ENCODE measurements at regions of chr1 and their contacts with region 1.

Region 1: DNA sequence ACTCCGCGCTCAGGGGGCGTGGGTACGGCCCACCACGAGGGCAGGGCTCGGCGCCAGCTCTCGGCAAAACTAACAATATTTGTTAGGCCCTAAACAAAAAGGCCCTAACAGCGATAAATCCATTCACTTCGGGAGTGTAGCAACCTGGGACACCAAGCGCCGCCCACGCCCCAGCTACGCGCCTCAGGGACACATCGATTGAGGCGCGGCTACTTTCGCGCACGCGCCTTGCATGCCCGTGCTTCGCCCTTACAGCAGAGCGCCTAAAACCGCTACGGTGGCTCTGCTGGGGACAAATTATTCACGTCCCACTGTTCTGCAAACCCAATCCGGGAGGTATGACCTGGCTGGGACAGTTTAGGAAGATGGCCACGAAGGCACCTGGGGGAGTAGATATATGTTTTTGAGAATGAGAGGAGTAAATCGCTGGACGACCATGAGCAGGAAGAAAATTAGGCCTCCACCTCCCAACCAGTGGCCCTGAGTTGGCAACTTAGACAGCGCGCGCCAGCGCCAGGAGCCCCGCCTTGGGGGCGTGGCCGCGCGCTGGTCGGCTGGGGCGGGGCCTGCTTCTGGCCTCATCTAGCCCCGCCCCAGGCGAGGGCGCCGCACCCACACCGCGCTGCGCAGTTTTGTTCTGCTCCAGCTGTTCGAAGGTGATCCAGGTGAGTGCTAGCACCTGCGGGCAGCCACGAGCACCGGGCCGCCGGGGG is at the start of gene MGST3:
- DNase-seq: peak; percentile 97
- H3K4me3 ChIP-seq: peak within 1 kb of the TSS; percentile 65 to 88 (median 86)
- H3K27ac ChIP-seq: peak within 1 kb of the TSS; percentile 91 to 95 (median 92)
- H3K4me1 ChIP-seq: peaks cover 34 to 47% (median 44%) of the 10 kb centered on the region in 4 donors
- H3K27me3 ChIP-seq: no peaks in the 10 kb centered on the region
- CTCF ChIP-seq: no peak
- EP300 ChIP-seq: no peak
- POLR2A ChIP-seq: peak; percentile 78
- total RNA-seq, gene MGST3: 202 to 257 (median 232) TPM

Region 2: GRCh38 chr1:165403835-165404482 is 226.8 kb before region 1 on chr1:
- intact Hi-C with region 1: no loop called
- DNase-seq: no peak
- H3K4me3 ChIP-seq: no peak overlapping the region
- H3K27ac ChIP-seq: no peak overlapping the region
- H3K4me1 ChIP-seq: no peaks in the 10 kb centered on the region
- H3K27me3 ChIP-seq: peaks cover 0 to 23% (median 0%) of the 10 kb centered on the region in 4 donors
- CTCF ChIP-seq: peak; percentile 27 to 47 (median 41)
- EP300 ChIP-seq: no peak
- POLR2A ChIP-seq: no peak

Region 3: DNA sequence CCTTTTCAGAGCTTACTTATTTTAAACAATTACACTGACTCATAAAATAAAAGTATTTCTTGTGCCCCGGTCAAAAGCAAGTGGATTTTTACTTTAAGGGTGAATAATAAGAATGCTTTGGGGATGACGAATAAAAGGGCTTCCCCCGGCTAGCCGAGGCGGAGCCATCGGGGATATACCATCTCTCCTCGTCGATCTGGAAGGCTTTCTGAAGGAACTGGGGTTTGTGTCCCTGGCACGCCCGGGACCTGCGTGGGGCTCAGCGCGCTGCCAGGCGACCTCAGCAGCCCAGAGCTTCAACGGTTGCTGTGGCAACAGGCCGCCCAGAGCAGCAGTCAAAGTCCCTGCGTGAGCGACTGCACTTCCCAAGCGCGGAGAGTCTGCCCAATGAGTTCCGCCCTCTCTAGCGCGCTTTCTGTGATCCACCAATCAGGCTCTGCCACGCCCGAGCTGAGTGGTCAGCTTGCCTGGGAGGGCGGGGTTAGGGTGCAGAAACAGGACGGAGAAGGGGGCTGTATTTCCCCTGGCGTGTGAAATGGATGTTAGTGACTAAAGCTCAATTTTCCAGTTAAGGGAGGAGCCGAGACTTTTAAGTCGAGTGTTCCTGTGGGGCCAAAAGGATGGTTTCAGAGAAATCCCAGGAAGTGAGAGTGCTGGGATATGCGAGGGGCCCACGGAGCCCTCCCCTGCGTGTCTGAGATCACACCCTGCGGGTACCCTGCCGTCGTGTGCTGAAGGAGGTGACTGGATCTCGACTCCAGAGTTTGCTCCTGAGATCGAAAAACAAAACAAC is 32.7 kb before region 1 on chr1:
- intact Hi-C with region 1: loop called (anchors 5 kb)
- DNase-seq: peak; percentile 99
- H3K4me3 ChIP-seq: peak overlapping the region; percentile 58 to 66 (median 60)
- H3K27ac ChIP-seq: peak overlapping the region; percentile 65 to 80 (median 72)
- H3K4me1 ChIP-seq: peaks cover 4 to 15% (median 11%) of the 10 kb centered on the region in 4 donors
- H3K27me3 ChIP-seq: peaks cover 0 to 8% (median 0%) of the 10 kb centered on the region in 4 donors
- CTCF ChIP-seq: no peak
- EP300 ChIP-seq: no peak
- POLR2A ChIP-seq: no peak

Region 4: GRCh38 chr1:165686971-165687433 is 56.2 kb after region 1 on chr1:
- intact Hi-C with region 1: no loop called
- DNase-seq: no peak
- H3K4me3 ChIP-seq: no peak overlapping the region
- H3K27ac ChIP-seq: no peak overlapping the region
- H3K4me1 ChIP-seq: peaks cover 0 to 13% (median 5%) of the 10 kb centered on the region in 4 donors
- H3K27me3 ChIP-seq: no peaks in the 10 kb centered on the region
- CTCF ChIP-seq: no peak
- EP300 ChIP-seq: no peak
- POLR2A ChIP-seq: no peak

Region 5: GRCh38 chr1:165697881-165698760 is 67.3 kb after region 1 on chr1 and contains the start of gene ALDH9A1:
- intact Hi-C with region 1: loop called (anchors 5 kb)
- DNase-seq: peak; percentile 96
- H3K4me3 ChIP-seq: peak within 1 kb of the TSS; percentile 57 to 91 (median 78)
- H3K27ac ChIP-seq: peak within 1 kb of the TSS; percentile 91 to 96 (median 94)
- H3K4me1 ChIP-seq: peaks cover 20 to 35% (median 31%) of the 10 kb centered on the region in 4 donors
- H3K27me3 ChIP-seq: peaks cover 0 to 1% (median 0%) of the 10 kb centered on the region in 4 donors
- CTCF ChIP-seq: peak; percentile 29 to 42 (median 38)
- EP300 ChIP-seq: no peak
- POLR2A ChIP-seq: peak; percentile 38
- total RNA-seq, gene ALDH9A1: 42.6 to 73.1 (median 66.1) TPM

Region 6: GRCh38 chr1:165768513-165769394 is 138.0 kb after region 1 on chr1 and contains the start of gene TMCO1:
- intact Hi-C with region 1: loop called (anchors 5 kb)
- DNase-seq: peak; percentile 98
- H3K4me3 ChIP-seq: peak within 1 kb of the TSS; percentile 59 to 93 (median 82)
- H3K27ac ChIP-seq: peak within 1 kb of the TSS; percentile 83 to 94 (median 87)
- H3K4me1 ChIP-seq: peaks cover 19 to 47% (median 41%) of the 10 kb centered on the region in 4 donors
- H3K27me3 ChIP-seq: no peaks in the 10 kb centered on the region
- CTCF ChIP-seq: peak; percentile 5 to 25 (median 12)
- EP300 ChIP-seq: no peak
- POLR2A ChIP-seq: no peak
- total RNA-seq, gene TMCO1: 36.0 to 45.7 (median 37.8) TPM

Region 7: DNA sequence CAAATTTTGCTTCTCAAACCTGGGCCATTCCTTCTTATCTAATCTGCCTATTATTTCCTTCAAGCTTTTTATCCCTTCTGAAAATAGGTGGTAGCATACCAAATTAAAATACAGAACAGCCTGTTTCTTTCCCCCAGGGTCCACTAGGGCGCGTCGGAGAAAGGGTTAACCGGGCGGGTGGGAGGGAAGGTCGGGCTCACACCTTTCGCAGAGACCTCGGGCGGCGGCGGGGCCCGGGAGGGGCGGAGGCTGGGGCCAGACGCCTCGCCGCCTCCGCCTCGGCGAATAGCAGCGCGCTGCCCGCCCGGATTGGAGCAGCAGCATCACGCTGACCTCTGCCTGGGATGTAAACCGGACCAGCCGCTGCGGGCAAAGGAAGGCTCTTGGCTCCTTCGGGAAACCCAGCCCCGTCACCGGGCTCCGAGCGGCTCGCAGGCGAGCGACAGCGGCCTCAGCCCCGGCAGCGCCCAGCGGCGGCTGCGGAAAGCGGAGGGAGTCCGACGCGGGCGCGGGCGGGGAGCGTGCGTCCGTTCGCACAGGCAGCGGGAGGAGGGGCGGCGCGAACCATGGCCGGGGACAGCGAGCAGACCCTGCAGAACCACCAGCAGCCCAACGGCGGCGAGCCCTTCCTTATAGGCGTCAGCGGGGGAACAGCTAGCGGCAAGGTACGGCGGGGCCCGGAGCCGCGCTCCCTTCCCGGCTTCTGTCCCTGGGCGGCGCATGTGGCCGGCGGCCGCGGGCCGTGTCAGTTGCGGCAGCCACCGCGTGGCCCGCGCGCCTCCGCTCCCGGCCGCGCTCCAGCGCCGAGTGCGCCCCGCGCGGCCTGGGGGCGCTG is 196.7 kb after region 1 on chr1 and contains the start of gene UCK2:
- intact Hi-C with region 1: loop called (anchors 10 kb)
- DNase-seq: peak; percentile 93
- H3K4me3 ChIP-seq: peak within 1 kb of the TSS; percentile 78 to 93 (median 86)
- H3K27ac ChIP-seq: peak within 1 kb of the TSS; percentile 88 to 97 (median 90)
- H3K4me1 ChIP-seq: peaks cover 14 to 24% (median 19%) of the 10 kb centered on the region in 4 donors
- H3K27me3 ChIP-seq: no peaks in the 10 kb centered on the region
- CTCF ChIP-seq: peak in 1 of 3 experiments; percentile 18
- EP300 ChIP-seq: no peak
- POLR2A ChIP-seq: peak; percentile 63
- total RNA-seq, gene UCK2: 13.7 to 33.7 (median 31.0) TPM

Measured in esophagus muscularis mucosa (tissue), 4 donors.